ENCODE measurements at regions of chr3 and their contacts with region 1.

Region 1: GRCh38 chr3:112013058-112013783 is 14.5 kb downstream of the TAGLN3 start:
- DNase-seq: peak; percentile 65 to 79 (median 74)
- H3K4me3 ChIP-seq: peak overlapping the region in 2 of 7 experiments; percentile 8 to 26
- H3K27ac ChIP-seq: no peak overlapping the region
- H3K4me1 ChIP-seq: peaks cover 0 to 10% (median 2%) of the 10 kb centered on the region in 4 experiments
- H3K27me3 ChIP-seq: no peaks in the 10 kb centered on the region

Region 2: GRCh38 chr3:111577794-111578685 is 435.2 kb before region 1 on chr3:
- CTCF ChIA-PET with region 1: interaction called, 10 read pairs
- POLR2A ChIA-PET with region 1: no interaction called
- DNase-seq: peak; percentile 71 to 83 (median 80)
- H3K4me3 ChIP-seq: no peak overlapping the region
- H3K27ac ChIP-seq: no peak overlapping the region
- H3K4me1 ChIP-seq: peaks cover 0 to 23% (median 3%) of the 10 kb centered on the region in 4 experiments
- H3K27me3 ChIP-seq: no peaks in the 10 kb centered on the region

Region 3: GRCh38 chr3:111794711-111795110 is 218.5 kb before region 1 on chr3:
- CTCF ChIA-PET with region 1: no interaction called
- POLR2A ChIA-PET with region 1: no interaction called
- DNase-seq: no peak
- H3K4me3 ChIP-seq: no peak overlapping the region
- H3K27ac ChIP-seq: no peak overlapping the region
- H3K4me1 ChIP-seq: no peaks in the 10 kb centered on the region
- H3K27me3 ChIP-seq: no peaks in the 10 kb centered on the region

Region 4: DNA sequence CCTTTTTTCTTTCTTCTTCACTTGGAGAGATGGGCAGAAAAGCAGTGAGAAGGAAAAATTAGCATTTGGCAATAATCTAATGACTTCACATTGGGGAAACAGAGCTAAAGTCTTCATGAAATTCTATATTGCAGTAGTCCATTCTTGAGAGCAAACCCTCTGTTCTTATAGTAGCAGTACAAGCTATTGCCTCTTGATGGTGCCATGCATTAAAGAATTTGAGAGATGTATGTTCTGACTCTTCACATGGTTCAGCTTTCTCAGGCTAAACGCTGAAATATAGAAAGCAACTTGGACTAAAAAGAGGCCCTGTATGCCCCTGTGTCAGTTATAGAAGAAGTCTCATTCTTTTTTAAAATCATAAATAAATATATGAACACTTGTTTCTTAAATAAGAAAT is 118.1 kb before region 1 on chr3:
- CTCF ChIA-PET with region 1: interaction called, 21 read pairs
- POLR2A ChIA-PET with region 1: no interaction called
- DNase-seq: peak; percentile 72 to 83 (median 81)
- H3K4me3 ChIP-seq: no peak overlapping the region
- H3K27ac ChIP-seq: no peak overlapping the region
- H3K4me1 ChIP-seq: no peaks in the 10 kb centered on the region
- H3K27me3 ChIP-seq: no peaks in the 10 kb centered on the region

Region 5: GRCh38 chr3:111989061-111989678 is 24.1 kb before region 1 on chr3:
- CTCF ChIA-PET with region 1: interaction called, 279 read pairs
- POLR2A ChIA-PET with region 1: interaction called, 3 read pairs
- DNase-seq: peak; percentile 56 to 71 (median 70)
- H3K4me3 ChIP-seq: no peak overlapping the region
- H3K27ac ChIP-seq: no peak overlapping the region
- H3K4me1 ChIP-seq: no peaks in the 10 kb centered on the region
- H3K27me3 ChIP-seq: no peaks in the 10 kb centered on the region

Region 6: DNA sequence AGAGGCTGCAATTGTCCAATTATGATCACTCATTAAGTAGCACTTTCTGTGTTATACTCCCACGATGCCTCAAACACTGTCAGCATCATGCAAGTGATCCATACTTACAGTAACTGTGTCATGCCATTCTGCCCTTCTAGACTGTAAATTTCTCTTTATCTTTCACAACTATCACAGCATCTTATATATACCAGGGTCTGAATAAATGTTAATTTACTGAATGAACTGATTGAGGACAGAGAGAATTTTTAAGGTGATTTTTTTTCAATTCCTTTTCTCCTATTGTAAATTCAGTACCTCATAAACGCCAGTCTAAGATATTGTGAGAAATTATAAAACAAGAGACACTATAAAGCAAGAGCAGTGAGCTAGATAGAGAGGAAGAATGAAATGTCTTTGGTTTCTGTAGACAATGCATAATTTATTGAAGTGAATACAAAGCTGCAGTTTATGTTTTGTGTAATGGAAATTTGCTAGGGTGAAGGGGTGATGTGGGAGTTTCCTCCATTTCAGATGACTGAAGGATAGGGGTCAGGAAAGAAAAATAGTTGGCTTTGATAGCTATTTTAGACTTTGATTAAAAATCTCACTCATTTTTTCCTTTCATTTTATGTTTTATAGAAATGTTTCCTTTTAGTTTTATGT is 337.1 kb after region 1 on chr3:
- CTCF ChIA-PET with region 1: no interaction called
- POLR2A ChIA-PET with region 1: no interaction called
- DNase-seq: no peak
- H3K4me3 ChIP-seq: no peak overlapping the region
- H3K27ac ChIP-seq: no peak overlapping the region
- H3K4me1 ChIP-seq: peaks cover 0 to 5% (median 3%) of the 10 kb centered on the region in 4 experiments
- H3K27me3 ChIP-seq: no peaks in the 10 kb centered on the region

Measured in common myeloid progenitor, CD34-positive (primary cell).